GM12878 (cell line): ENCODE measurements at regions of chr11 and their contacts with region 1.

Region 1: GRCh38 chr11:125358254-125358840 is 137.7 kb downstream of the FEZ1 start:
- DNase-seq: no peak
- ATAC-seq: peak; percentile 23; the same call in 2 of the 3 replicates
- H3K4me3 ChIP-seq: no peak overlapping the region
- H3K27ac ChIP-seq: no peak overlapping the region
- H3K4me1 ChIP-seq: no peaks in the 10 kb centered on the region; the same call in 1 of the 2 replicates
- H3K27me3 ChIP-seq: peaks cover 0 to 1% of the 10 kb centered on the region in 2 experiments; a peak in 2 of 4 replicates
- CTCF ChIP-seq: no peak
- EP300 ChIP-seq: no peak
- POLR2A ChIP-seq: no peak
- RAD21 ChIP-seq: no peak

Region 2: DNA sequence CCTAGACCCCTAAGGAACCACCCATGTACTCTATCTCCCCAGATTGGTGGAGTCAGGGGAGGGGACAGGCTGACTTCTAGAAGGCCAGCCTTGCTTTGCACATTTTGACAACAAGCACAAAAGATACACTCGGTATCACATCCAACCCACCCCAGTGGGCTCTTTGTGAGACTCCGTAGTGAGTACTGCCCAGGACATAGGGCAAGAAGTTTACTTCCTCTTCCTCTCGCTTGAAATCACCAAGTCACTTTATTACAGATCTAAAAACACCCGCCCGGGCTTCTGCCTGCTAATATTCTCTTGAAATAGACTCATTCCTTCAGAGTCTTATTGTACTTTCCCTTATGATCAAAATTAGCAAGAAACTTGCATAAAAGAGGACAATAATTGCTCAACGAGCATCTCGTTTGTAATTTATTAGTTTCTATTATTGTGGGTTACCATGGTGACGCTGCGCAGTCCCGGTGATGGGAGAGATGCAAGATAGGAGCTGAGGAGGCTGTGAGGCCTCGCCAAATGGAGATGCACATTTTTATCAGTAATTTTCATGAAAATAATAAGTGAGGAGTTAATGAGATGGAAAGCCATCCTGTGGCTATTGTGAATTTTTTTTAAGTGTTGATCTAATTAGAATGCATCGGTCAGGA is 40.8 kb after region 1 on chr11:
- CTCF ChIA-PET with region 1: interaction called, 31 read pairs
- POLR2A ChIA-PET with region 1: interaction called, 19 read pairs
- RAD21 ChIA-PET with region 1: interaction called, 37 read pairs
- SMC1A ChIA-PET with region 1: interaction called, 14 read pairs
- in situ Hi-C with region 1: no loop called
- intact Hi-C with region 1: no loop called
- DNase-seq: no peak
- ATAC-seq: peak; percentile 74
- H3K4me3 ChIP-seq: no peak overlapping the region
- H3K27ac ChIP-seq: no peak overlapping the region
- H3K4me1 ChIP-seq: no peaks in the 10 kb centered on the region; the same call in 1 of the 2 replicates
- H3K27me3 ChIP-seq: peaks cover 10 to 14% of the 10 kb centered on the region in 2 experiments
- CTCF ChIP-seq: no peak
- EP300 ChIP-seq: no peak
- POLR2A ChIP-seq: no peak
- RAD21 ChIP-seq: no peak